ENCODE measurements at regions of chr1 and their contacts with region 1.

Region 1: GRCh38 chr1:168178638-168179437 is at the start of gene TIPRL:
- DNase-seq: peak; percentile 100
- H3K4me3 Mint-ChIP-seq: no peak within 1 kb of the TSS
- H3K27ac Mint-ChIP-seq: no peak within 1 kb of the TSS
- H3K4me1 Mint-ChIP-seq: peaks cover 7% of the 10 kb centered on the region
- H3K27me3 Mint-ChIP-seq: no peaks in the 10 kb centered on the region
- CTCF ChIP-seq: peak; percentile 73
- total RNA-seq, gene TIPRL: 90.9 and 111 TPM in 2 replicates

Region 2: DNA sequence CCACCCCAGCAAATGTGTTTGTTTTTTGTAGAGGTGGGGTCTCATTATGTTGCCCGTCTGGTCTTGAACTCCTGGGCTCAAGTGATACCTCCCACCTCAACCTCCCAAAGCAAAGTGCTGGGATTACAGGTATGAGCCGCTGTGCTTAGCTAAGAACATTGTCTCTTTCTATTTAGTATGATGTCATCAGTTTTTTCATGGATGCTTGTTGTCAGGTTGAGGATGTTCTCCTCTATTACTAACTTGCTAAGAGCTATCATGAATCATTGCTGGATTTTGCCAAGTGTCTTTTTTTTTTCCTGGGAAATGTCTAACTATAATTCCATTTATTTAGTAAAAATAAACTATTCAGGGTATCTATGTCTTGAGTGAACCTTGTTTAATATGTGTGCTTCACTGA is 222.9 kb before region 1 on chr1:
- CTCF ChIA-PET with region 1: no interaction called
- POLR2A ChIA-PET with region 1: no interaction called
- intact Hi-C with region 1: no loop called
- DNase-seq: no peak
- H3K4me3 Mint-ChIP-seq: no peak overlapping the region
- H3K27ac Mint-ChIP-seq: peak overlapping the region; percentile 42
- H3K4me1 Mint-ChIP-seq: peaks cover 22% of the 10 kb centered on the region
- H3K27me3 Mint-ChIP-seq: no peaks in the 10 kb centered on the region
- CTCF ChIP-seq: no peak

Region 3: GRCh38 chr1:168195199-168196135 is 16.6 kb after region 1 on chr1:
- CTCF ChIA-PET with region 1: interaction called, 4 read pairs
- POLR2A ChIA-PET with region 1: interaction called, 11 read pairs
- intact Hi-C with region 1: no loop called
- DNase-seq: no peak
- H3K4me3 Mint-ChIP-seq: no peak overlapping the region
- H3K27ac Mint-ChIP-seq: no peak overlapping the region
- H3K4me1 Mint-ChIP-seq: peaks cover 8% of the 10 kb centered on the region
- H3K27me3 Mint-ChIP-seq: no peaks in the 10 kb centered on the region
- CTCF ChIP-seq: no peak